Uterus (tissue), 4 donors: ENCODE measurements at regions of chr11 and their contacts with region 1.

Region 1: GRCh38 chr11:95150946-95151684 is 61.5 kb downstream of the ENDOD1 start:
- DNase-seq: peak; percentile 92 to 95
- H3K4me3 ChIP-seq: peak overlapping the region; percentile 52 to 56
- H3K27ac ChIP-seq: peak overlapping the region; percentile 94 to 95
- H3K4me1 ChIP-seq: no peaks in the 10 kb centered on the region
- H3K27me3 ChIP-seq: no peaks in the 10 kb centered on the region
- CTCF ChIP-seq: peak; percentile 81 to 98 (median 92)
- POLR2A ChIP-seq: peak; percentile 76 to 83

Region 2: DNA sequence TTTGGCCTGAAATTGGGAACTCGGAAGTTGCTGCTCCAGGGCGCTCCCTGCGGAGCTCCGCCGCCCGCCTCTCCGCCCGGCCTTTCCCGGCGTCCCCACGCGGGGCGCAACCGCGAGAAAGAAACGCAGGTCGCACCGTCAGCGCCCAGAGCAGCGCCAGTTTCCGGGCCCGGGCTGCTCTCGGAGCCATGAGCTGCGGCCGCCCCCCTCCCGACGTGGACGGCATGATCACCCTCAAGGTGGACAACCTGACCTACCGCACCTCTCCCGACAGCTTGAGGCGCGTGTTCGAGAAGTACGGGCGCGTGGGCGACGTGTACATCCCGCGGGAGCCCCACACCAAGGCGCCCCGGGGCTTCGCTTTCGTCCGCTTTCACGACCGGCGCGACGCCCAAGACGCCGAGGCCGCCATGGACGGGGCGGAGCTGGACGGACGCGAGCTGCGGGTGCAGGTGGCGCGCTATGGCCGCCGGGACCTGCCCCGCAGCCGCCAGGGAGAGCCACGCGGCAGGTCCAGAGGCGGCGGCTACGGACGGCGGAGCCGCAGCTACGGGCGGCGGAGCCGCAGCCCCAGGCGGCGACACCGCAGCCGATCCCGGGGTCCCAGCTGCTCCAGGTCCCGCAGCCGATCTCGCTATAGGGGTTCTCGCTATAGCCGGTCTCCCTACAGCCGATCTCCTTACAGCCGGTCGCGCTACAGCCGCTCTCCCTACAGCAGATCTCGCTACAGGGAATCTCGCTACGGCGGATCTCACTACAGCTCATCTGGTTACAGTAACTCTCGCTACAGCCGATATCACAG is 83.9 kb before region 1 on chr11:
- intact Hi-C with region 1: loop called (anchors 5 kb)
- DNase-seq: peak; percentile 86 to 90
- H3K4me3 ChIP-seq: peak overlapping the region; percentile 84
- H3K27ac ChIP-seq: peak overlapping the region; percentile 98 to 99
- H3K4me1 ChIP-seq: peaks cover 0 to 12% of the 10 kb centered on the region in 2 donors
- H3K27me3 ChIP-seq: no peaks in the 10 kb centered on the region
- CTCF ChIP-seq: peak in 3 of 4 experiments; percentile 51 to 83 (median 83)
- POLR2A ChIP-seq: peak; percentile 23 to 73

Region 3: DNA sequence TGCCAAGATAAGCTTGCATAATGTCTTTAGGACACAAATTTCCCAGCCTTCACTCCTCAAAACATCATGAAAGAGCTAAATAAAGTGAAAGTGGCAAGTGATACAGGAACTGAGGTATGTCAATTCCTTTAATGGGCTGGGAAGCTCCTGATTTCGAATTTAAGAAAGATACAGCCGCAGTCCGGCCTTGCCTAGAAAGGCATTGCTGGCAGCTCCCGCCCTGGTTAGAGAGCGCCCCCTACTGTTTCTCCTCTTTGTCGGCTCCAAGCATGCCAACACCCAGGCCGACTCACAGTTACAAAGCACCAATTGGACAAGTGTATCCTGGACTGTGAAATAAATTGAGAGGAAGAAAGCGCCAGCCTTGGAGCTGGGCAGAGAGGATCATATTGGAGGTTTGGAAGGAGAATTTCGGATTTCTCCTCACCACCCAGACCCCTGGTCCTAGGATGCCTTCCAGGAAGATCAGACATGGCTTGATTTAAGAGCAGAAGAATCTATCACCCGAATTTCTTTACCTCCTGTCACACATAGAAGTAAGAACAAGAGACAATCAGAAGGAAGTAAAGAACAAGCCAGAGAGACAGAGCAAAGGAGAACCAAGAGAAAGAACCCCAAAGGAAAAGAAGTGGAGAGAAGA is 554.5 kb after region 1 on chr11:
- intact Hi-C with region 1: loop called (anchors 2 kb)
- DNase-seq: peak; percentile 88 to 93
- H3K4me3 ChIP-seq: no peak overlapping the region
- H3K27ac ChIP-seq: peak overlapping the region; percentile 77 to 85
- H3K4me1 ChIP-seq: peaks cover 0 to 7% of the 10 kb centered on the region in 2 donors
- H3K27me3 ChIP-seq: no peaks in the 10 kb centered on the region
- CTCF ChIP-seq: peak; percentile 86 to 93 (median 92)
- POLR2A ChIP-seq: peak in 1 of 2 donors; percentile 11

Region 4: DNA sequence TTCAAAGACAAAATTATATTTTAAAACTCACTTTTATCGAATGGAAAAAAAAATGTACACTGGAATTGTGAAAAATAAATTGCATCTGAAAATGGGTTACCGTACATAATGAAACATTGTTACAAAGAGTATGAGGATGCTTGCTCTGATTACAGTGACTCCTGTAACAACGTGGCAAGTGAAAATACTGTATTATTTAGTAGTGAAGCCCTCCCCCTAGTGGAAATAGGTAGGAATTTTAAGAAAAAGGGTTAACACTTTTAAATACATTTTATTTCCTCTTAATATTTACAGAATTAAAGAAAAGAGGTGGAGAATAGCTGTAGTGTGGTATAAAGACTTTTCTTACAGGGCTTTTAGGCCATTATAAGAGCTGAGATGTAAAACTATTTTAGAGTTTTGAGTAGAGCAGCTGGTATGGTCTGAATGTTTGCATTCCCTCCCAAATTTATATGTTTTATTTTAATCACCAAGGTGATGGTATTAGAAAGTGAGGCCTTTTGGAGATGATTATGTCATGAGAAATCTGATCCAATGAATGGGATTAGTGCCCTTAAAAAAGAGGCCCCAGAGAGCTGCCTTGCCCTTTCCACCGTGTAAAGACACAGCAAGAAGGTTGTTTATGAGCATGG is 613.3 kb after region 1 on chr11:
- intact Hi-C with region 1: loop called (anchors 10 kb)
- DNase-seq: no peak
- H3K4me3 ChIP-seq: no peak overlapping the region
- H3K27ac ChIP-seq: no peak overlapping the region
- H3K4me1 ChIP-seq: no peaks in the 10 kb centered on the region
- H3K27me3 ChIP-seq: no peaks in the 10 kb centered on the region
- CTCF ChIP-seq: peak; percentile 66 to 84 (median 79)
- POLR2A ChIP-seq: no peak